ENCODE measurements at regions of chr11 and their contacts with region 1.

Region 1: GRCh38 chr11:79400717-79401686 is 39.8 kb downstream of the TENM4 start:
- DNase-seq: peak in 2 of 5 donors; percentile 32 to 33
- ATAC-seq: peak in 3 of 4 donors; percentile 67 to 71 (median 69)
- H3K4me3 ChIP-seq: no peak overlapping the region
- H3K27ac ChIP-seq: no peak overlapping the region
- H3K4me1 ChIP-seq: no peaks in the 10 kb centered on the region
- H3K27me3 ChIP-seq: no peaks in the 10 kb centered on the region
- CTCF ChIP-seq: peak; percentile 34 to 66 (median 51)
- POLR2A ChIP-seq: no peak

Region 2: GRCh38 chr11:79342686-79343085 is 58.3 kb before region 1 on chr11:
- intact Hi-C with region 1: loop called in 1 of 10 experiments (anchors 10 kb)
- DNase-seq: no peak
- ATAC-seq: no peak
- H3K4me3 ChIP-seq: no peak overlapping the region
- H3K27ac ChIP-seq: no peak overlapping the region
- H3K4me1 ChIP-seq: no peaks in the 10 kb centered on the region
- H3K27me3 ChIP-seq: no peaks in the 10 kb centered on the region
- CTCF ChIP-seq: no peak
- POLR2A ChIP-seq: no peak

Region 3: GRCh38 chr11:79482800-79483199 is 81.8 kb after region 1 on chr11:
- intact Hi-C with region 1: loop called in 1 of 10 experiments (anchors 10 kb)
- DNase-seq: no peak
- ATAC-seq: no peak
- H3K4me3 ChIP-seq: no peak overlapping the region
- H3K27ac ChIP-seq: no peak overlapping the region
- H3K4me1 ChIP-seq: no peaks in the 10 kb centered on the region
- H3K27me3 ChIP-seq: peaks cover 0 to 2% (median 0%) of the 10 kb centered on the region in 9 donors
- CTCF ChIP-seq: no peak
- POLR2A ChIP-seq: no peak

Region 4: DNA sequence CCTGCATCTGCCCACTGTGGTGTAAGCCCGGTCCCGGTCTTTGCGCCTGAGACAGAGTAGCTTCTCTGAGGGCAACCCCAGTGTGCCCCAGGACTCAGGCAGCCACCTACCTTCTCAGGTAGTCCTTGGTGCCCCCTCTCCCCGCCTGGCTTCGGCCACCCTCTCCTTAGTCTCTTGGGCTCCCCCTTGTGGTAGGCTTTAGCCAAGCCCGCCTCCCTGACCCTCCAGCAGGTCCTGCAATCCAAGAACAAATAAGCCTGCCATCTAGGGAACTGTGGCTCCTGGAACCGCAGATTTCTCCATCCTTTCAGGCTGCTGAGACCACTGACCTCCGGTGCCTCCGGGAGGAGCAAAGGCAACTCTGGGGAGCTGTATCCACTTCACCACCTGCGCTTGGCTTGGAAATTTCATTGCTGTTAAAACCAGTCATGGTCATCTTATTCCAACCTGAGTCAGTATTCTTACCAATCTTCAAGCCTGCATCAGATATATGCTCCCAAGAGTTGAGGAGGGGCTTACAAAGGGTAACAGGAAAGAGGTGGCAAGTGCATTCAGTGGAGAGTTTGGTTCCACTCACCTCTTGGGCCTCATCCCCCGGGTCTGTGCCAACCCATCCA is 92.7 kb after region 1 on chr11:
- intact Hi-C with region 1: loop called in 3 of 10 experiments (anchors 5 to 10 kb)
- DNase-seq: peak; percentile 57 to 72 (median 62)
- ATAC-seq: peak in 3 of 4 donors; percentile 71 to 91 (median 83)
- H3K4me3 ChIP-seq: no peak overlapping the region
- H3K27ac ChIP-seq: no peak overlapping the region
- H3K4me1 ChIP-seq: no peaks in the 10 kb centered on the region
- H3K27me3 ChIP-seq: peaks cover 0 to 6% (median 0%) of the 10 kb centered on the region in 9 donors
- CTCF ChIP-seq: peak; percentile 74 to 89 (median 84)
- POLR2A ChIP-seq: no peak

Measured in heart left ventricle (tissue), 16 donors.